Activated CD4-positive, alpha-beta memory T cell treated with anti-CD3 and anti-CD28 coated beads for 36 hours (primary cell): ENCODE measurements at regions of chr5 and their contacts with region 1.

Region 1: DNA sequence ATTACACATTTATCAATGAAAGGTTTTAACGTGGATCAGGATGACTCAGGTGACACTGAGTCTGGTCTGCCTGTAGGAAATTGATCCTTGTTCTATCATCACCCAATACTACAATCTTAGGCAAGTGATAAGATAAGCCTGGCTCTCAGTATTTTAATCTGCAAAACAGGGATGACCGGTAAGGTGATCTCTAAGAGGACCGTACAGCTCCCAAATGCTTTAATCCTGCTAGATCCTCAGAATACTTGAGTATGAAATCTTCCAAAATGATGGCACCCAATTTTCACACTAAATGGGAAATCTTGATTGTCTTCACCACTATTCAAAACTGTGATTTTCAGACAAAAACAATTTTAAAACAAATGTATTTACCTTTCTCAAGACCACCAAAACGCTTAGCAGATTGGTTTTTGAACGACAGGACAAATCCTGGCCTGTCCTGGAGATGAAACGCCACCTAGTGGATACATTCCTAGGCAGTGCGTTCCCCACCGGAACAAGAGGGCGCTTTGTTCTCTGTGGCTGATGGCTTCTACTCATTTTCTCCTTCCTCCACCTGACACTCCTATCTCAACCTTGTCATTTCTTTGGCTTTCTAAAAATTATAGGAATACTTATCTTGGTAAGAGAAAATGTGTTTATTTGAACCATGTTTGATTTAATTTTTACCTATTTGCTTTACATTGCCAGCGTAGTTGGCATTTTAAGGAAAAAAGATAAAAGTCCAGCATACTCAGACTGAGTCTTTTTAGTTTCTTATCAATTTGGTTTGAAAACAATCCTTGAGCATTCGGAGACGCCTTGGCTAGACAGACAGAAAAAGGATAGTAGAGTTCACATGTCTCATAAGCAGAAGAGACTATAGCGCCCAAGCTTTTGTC is 41.2 kb upstream of the VCAN start:
- DNase-seq: peak; percentile 67
- H3K4me3 Mint-ChIP-seq: no peak overlapping the region
- H3K27ac Mint-ChIP-seq: no peak overlapping the region
- H3K4me1 Mint-ChIP-seq: no peaks in the 10 kb centered on the region
- H3K27me3 Mint-ChIP-seq: no peaks in the 10 kb centered on the region

Region 2: GRCh38 chr5:82641331-82642003 is 788.9 kb before region 1 on chr5:
- CTCF ChIA-PET with region 1: interaction called, 18 read pairs
- POLR2A ChIA-PET with region 1: no interaction called
- intact Hi-C with region 1: loop called (anchors 1 kb)
- DNase-seq: peak; percentile 12
- H3K4me3 Mint-ChIP-seq: no peak overlapping the region
- H3K27ac Mint-ChIP-seq: no peak overlapping the region
- H3K4me1 Mint-ChIP-seq: no peaks in the 10 kb centered on the region
- H3K27me3 Mint-ChIP-seq: no peaks in the 10 kb centered on the region

Region 3: GRCh38 chr5:83076742-83077661 is 353.4 kb before region 1 on chr5 and contains the starts of genes TMEM167A and XRCC4:
- CTCF ChIA-PET with region 1: no interaction called
- POLR2A ChIA-PET with region 1: no interaction called
- intact Hi-C with region 1: loop called (anchors 10 kb)
- DNase-seq: peak; percentile 96
- H3K4me3 Mint-ChIP-seq: peak within 1 kb of the TSS; percentile 99
- H3K27ac Mint-ChIP-seq: peak within 1 kb of the TSS; percentile 98
- H3K4me1 Mint-ChIP-seq: peaks cover 50% of the 10 kb centered on the region
- H3K27me3 Mint-ChIP-seq: no peaks in the 10 kb centered on the region
- total RNA-seq, gene TMEM167A: 73.6 to 78.6 TPM
- total RNA-seq, gene XRCC4: 14.0 to 15.2 TPM

Region 4: GRCh38 chr5:83418356-83419321 is 11.7 kb before region 1 on chr5:
- CTCF ChIA-PET with region 1: interaction called, 18 read pairs
- POLR2A ChIA-PET with region 1: no interaction called
- intact Hi-C with region 1: no loop called
- DNase-seq: no peak
- H3K4me3 Mint-ChIP-seq: no peak overlapping the region
- H3K27ac Mint-ChIP-seq: no peak overlapping the region
- H3K4me1 Mint-ChIP-seq: no peaks in the 10 kb centered on the region
- H3K27me3 Mint-ChIP-seq: peaks cover 3% of the 10 kb centered on the region

Region 5: DNA sequence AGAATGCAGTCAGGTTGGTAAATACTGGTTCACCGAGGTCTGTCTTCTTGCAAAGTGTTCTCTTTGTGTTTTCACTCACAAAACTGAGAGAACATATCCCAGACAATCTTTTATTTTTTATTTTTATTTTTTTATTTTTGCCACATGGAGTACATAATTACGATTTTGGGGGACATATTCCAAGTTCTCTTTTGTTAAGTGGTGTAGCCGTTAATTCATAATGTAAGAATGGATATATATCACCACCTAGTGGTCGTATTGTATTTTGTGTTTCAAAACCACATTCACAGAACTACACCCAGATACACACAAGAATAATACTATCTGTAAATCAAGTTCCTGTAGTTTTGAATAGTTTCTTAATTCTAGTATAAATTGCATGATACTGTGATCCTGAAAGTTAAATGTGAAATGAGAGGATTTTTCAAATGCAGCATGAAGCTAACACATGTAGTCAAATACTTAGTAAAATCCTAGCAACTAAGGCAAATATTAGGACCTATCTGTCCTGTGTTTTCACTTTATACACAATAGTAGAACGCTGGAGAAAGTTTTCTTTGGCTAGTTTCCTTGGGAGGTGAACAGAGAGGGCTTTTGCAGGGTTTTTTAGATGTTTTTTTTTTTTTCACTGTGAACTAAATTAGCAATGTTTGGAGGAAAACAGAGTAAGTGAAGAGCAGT is 133.8 kb after region 1 on chr5:
- CTCF ChIA-PET with region 1: interaction called, 3 read pairs
- POLR2A ChIA-PET with region 1: no interaction called
- intact Hi-C with region 1: loop called (anchors 5 kb)
- DNase-seq: no peak
- H3K4me3 Mint-ChIP-seq: no peak overlapping the region
- H3K27ac Mint-ChIP-seq: no peak overlapping the region
- H3K4me1 Mint-ChIP-seq: no peaks in the 10 kb centered on the region
- H3K27me3 Mint-ChIP-seq: peaks cover 29% of the 10 kb centered on the region